ENCODE measurements at regions of chr1 and their contacts with region 1.

Region 1: GRCh38 chr1:11645670-11646265 is 8.5 kb downstream of the FBXO2 start:
- DNase-seq: peak; percentile 83
- H3K4me3 ChIP-seq: no peak overlapping the region
- H3K27ac ChIP-seq: no peak overlapping the region
- H3K4me1 ChIP-seq: peaks cover 0 to 9% of the 10 kb centered on the region in 2 experiments; a peak in 1 of 4 replicates
- H3K27me3 ChIP-seq: no peaks in the 10 kb centered on the region
- CTCF ChIP-seq: peak; percentile 83
- EP300 ChIP-seq: no peak
- RAD21 ChIP-seq: peak; percentile 88

Region 2: GRCh38 chr1:11248155-11248554 is 397.6 kb before region 1 on chr1:
- CTCF ChIA-PET with region 1: interaction called, 153 read pairs
- POLR2A ChIA-PET with region 1: no interaction called
- DNase-seq: no peak
- H3K4me3 ChIP-seq: no peak overlapping the region
- H3K27ac ChIP-seq: no peak overlapping the region
- H3K4me1 ChIP-seq: no peaks in the 10 kb centered on the region
- H3K27me3 ChIP-seq: no peaks in the 10 kb centered on the region
- CTCF ChIP-seq: no peak
- EP300 ChIP-seq: no peak
- RAD21 ChIP-seq: 0 out of 2 replicates have a peak, but pooled peaks have one; percentile 7

Region 3: GRCh38 chr1:11285883-11286734 is 359.7 kb before region 1 on chr1:
- CTCF ChIA-PET with region 1: interaction called, 42 read pairs
- POLR2A ChIA-PET with region 1: interaction called, 3 read pairs
- DNase-seq: peak; percentile 49
- H3K4me3 ChIP-seq: no peak overlapping the region
- H3K27ac ChIP-seq: no peak overlapping the region
- H3K4me1 ChIP-seq: peaks cover 0 to 10% of the 10 kb centered on the region in 2 experiments; a peak in 2 of 4 replicates
- H3K27me3 ChIP-seq: no peaks in the 10 kb centered on the region
- CTCF ChIP-seq: peak; percentile 55
- EP300 ChIP-seq: no peak
- RAD21 ChIP-seq: peak; percentile 81

Region 4: GRCh38 chr1:11337580-11338073 is 308.1 kb before region 1 on chr1:
- CTCF ChIA-PET with region 1: interaction called, 19 read pairs
- POLR2A ChIA-PET with region 1: no interaction called
- DNase-seq: peak; percentile 88
- H3K4me3 ChIP-seq: peak overlapping the region in 1 of 2 experiments; percentile 41; a peak in 1 of 4 replicates
- H3K27ac ChIP-seq: no peak overlapping the region
- H3K4me1 ChIP-seq: peaks cover 0 to 30% of the 10 kb centered on the region in 2 experiments; a peak in 1 of 4 replicates
- H3K27me3 ChIP-seq: no peaks in the 10 kb centered on the region; the same call in 1 of the 2 replicates
- CTCF ChIP-seq: peak; percentile 74
- EP300 ChIP-seq: 0 out of 4 replicates have a peak, but pooled peaks of 1 of the 2 experiments have one; percentile 10
- RAD21 ChIP-seq: peak; percentile 76

Region 5: GRCh38 chr1:11478571-11479374 is 167.0 kb before region 1 on chr1 and contains the start of gene DISP3:
- CTCF ChIA-PET with region 1: interaction called, 36 read pairs
- POLR2A ChIA-PET with region 1: interaction called, 8 read pairs
- DNase-seq: peak; percentile 99
- H3K4me3 ChIP-seq: peak within 1 kb of the TSS; percentile 66 to 75
- H3K27ac ChIP-seq: peak within 1 kb of the TSS in 1 of 2 experiments; percentile 89; a peak in 2 of 4 replicates
- H3K4me1 ChIP-seq: peaks cover 0 to 50% of the 10 kb centered on the region in 2 experiments; a peak in 2 of 4 replicates
- H3K27me3 ChIP-seq: no peaks in the 10 kb centered on the region
- CTCF ChIP-seq: peak; percentile 62
- EP300 ChIP-seq: peak in 1 of 2 experiments; percentile 55; a peak in 1 of 4 replicates
- RAD21 ChIP-seq: peak; percentile 50
- polyA plus RNA-seq, gene DISP3: 0.08 and 0.15 TPM in 2 replicates

Region 6: GRCh38 chr1:11681071-11681771 is 35.5 kb after region 1 on chr1 and contains the start of gene MAD2L2:
- CTCF ChIA-PET with region 1: interaction called, 12 read pairs
- POLR2A ChIA-PET with region 1: interaction called, 3 read pairs
- DNase-seq: peak; percentile 97
- H3K4me3 ChIP-seq: peak within 1 kb of the TSS; percentile 90 to 96
- H3K27ac ChIP-seq: peak within 1 kb of the TSS; percentile 58 to 67
- H3K4me1 ChIP-seq: peaks cover 10 to 16% of the 10 kb centered on the region in 2 experiments; a peak in 2 of 4 replicates
- H3K27me3 ChIP-seq: no peaks in the 10 kb centered on the region
- CTCF ChIP-seq: no peak
- EP300 ChIP-seq: no peak
- RAD21 ChIP-seq: no peak
- polyA plus RNA-seq, gene MAD2L2: 70.0 and 94.0 TPM in 2 replicates

Region 7: DNA sequence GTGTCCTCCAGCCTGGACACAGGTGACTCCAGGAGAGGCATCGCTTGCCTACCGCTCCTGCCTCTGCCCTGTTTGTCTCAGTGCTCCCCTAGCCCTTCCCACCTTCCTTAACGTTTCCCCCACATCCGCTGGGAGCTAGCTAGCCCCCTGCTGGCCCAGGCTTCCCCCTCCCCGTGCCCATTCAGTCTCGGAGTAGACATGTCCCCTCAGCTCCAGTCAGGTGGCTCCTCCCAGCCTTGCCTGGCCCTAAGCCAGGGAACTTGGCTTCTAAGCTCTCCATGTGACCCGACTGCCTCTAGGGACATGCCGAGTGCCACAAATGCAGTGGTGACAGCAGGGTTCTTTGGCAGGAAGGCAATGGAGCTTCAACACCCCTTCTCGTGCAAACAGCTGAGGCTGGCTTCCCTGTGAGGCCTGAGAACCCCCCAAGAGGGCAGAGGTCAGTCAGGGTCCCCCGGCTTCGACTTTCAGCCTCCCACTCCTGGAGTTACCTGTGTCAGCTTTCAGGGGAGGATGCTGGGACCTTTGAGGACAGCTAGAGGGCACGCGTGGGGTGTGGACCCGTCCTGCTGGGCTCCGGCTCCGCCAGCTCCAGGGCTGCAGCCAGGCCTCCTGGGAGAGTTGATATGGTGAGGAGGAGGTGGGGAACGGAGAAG is 62.0 kb after region 1 on chr1:
- CTCF ChIA-PET with region 1: interaction called, 66 read pairs
- POLR2A ChIA-PET with region 1: no interaction called
- DNase-seq: peak; percentile 74
- H3K4me3 ChIP-seq: no peak overlapping the region
- H3K27ac ChIP-seq: no peak overlapping the region
- H3K4me1 ChIP-seq: peaks cover 0 to 8% of the 10 kb centered on the region in 2 experiments; a peak in 1 of 4 replicates
- H3K27me3 ChIP-seq: no peaks in the 10 kb centered on the region
- CTCF ChIP-seq: no peak
- EP300 ChIP-seq: no peak
- RAD21 ChIP-seq: no peak

Measured in SK-N-SH (cell line).